Head of caudate nucleus (tissue), 42 donors: ENCODE measurements at regions of chr9 and their contacts with region 1.

Region 1: DNA sequence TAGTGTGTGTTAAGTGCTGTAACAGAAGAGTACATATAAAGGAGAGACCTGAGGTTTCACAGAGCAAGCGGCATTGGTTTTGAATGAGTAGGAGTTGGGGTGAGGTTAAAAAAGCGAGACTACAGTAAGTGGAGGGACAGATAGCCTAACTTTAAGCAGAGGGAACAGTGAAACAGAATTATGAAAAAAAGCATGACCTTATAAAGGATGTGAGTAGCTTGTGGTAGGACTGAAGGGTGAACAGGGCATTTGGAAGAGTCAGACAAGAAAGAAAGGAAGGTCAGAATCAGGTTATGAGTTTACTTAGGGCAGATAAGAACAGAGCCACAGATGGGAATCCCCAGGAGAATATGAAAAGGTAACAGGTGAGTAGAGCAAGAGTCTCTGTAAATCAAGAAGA is 22.5 kb downstream of the MSANTD3 start:
- DNase-seq: no peak

Region 2: DNA sequence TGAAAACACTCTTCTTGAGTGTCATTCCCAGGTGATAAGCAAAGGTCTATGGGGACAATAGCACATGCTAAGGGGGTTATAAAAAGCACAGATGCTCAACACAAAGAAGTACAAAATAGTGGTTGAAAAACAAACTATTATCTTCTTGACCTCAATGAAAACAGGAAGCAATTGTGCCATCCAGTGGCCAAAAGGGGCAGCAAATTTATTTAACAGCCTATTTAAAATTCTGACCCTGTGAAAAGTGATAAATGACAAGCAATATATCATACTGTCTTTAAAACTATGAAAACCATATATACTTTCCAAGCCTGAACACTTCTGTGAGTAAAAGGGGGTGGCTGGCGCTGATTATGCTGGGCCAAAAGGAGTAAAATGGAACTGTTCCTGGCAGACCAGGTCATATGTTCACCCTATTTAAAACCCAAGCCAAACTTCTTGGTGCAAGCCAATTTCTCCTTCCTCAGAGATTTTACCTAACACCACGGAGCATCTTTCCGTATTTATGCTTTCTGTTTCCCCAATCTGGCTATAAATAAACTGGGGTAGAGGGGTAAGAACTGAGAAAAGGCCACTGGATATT is 126.4 kb before region 1 on chr9:
- intact Hi-C with region 1: no loop called
- DNase-seq: peak in 33 of 42 donors; percentile 15 to 78 (median 37)

Region 3: DNA sequence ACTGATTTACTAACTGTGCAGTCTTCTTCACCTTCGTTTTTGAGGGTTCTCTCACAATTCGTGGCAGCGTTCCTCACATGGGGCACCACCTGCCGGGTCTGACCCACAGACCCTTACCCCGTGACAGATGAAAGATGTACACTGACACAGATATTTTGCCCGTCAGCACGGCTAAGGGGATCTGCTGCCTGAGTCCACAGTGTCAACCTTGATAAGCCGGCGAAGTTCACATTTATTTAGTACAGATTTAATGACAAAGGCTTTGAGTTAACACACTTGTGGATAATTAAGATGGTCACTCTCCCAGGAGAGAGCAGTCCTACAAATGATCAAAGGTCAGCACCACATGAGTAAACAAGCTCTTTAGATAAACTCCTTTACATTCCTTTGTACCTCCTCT is 80.7 kb before region 1 on chr9:
- intact Hi-C with region 1: no loop called
- DNase-seq: no peak

Region 4: GRCh38 chr9:100598641-100599145 is 149.3 kb after region 1 on chr9:
- intact Hi-C with region 1: loop called (anchors 5 kb)
- DNase-seq: peak; percentile 69 to 95 (median 88)